ENCODE measurements at regions of chr17 and their contacts with region 1.

Region 1: DNA sequence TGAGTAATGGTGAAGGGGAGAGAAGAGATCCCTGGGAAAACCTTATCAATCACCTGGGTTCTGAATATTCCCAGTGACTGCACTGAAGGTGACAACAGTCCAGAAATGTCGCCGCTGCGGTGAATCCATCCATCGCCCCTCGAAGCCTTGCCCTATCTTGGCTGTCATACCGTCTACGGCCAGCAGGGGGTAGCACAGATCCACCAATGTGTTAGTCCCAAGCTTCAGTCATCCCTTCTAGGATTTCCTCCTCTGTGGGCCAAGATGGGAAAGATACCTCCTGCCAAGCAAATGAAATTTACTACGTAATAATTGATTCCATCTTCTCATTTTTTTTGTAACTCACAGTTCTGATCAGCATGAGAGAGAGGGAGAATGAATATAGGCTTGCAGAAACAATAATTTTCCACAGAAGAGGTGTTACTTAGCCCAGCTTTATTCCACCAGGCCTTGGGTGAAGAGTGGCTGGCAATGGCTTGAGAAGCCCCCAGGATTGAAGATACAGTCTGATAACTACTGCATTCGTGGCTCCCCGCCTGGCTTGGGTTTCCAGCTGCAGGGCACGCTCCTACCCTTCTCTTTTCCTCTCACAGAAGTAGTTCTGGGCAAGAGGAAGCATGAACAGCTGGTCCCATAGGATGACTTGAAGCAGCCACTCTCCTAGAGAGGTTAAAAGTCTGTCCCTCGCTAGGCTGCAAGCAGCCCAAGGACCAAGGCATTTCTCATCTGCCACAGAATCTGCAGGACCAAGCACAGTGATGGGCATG is 2.6 kb upstream of the FMNL1 start:
- DNase-seq: peak; percentile 61
- H3K4me3 ChIP-seq: peak overlapping the region; percentile 27; the same call in 1 of the 2 replicates
- H3K27ac ChIP-seq: no peak overlapping the region
- H3K27me3 ChIP-seq: peaks cover 24% of the 10 kb centered on the region
- CTCF ChIP-seq: peak; percentile 88

Region 2: GRCh38 chr17:45235416-45236281 is 16.6 kb after region 1 on chr17:
- CTCF ChIA-PET with region 1: interaction called, 48 read pairs
- POLR2A ChIA-PET with region 1: interaction called, 5 read pairs
- DNase-seq: peak; percentile 49
- H3K4me3 ChIP-seq: no peak overlapping the region
- H3K27ac ChIP-seq: no peak overlapping the region
- H3K27me3 ChIP-seq: peaks cover 10% of the 10 kb centered on the region
- CTCF ChIP-seq: peak; percentile 81

Region 3: DNA sequence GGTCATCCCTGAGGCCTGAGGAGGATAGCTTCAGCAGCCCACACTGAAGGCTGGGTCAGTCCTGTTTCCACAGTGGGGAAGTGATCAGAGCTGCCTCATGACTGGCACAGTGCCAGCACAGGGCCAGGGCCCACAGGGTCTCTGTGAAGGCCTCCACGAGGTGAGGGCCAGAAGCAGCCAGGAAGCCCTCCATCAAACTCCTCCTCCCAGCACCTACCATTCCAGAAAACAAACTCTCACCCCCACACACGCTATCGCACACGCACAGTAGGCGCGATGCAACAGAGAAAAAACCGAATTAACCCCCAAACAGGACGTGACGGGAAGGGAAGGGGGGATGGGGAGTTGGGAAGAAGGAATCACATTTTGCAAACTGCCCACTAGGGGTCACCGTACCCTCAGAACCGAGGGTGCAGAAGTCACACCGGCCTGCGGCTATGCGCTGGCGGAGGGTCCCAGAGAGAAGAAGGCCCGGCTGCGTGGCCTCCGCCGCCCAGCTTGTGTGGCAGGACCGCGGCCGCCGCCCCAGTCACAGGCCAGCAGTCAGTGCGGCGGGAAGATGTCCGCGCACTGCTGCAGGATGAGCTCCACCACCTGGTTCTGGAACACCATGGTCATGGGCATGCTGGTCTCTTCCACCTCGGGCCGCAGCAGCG is 176.0 kb after region 1 on chr17:
- CTCF ChIA-PET with region 1: interaction called, 10 read pairs
- POLR2A ChIA-PET with region 1: interaction called, 3 read pairs
- DNase-seq: peak; percentile 81
- H3K4me3 ChIP-seq: peak overlapping the region; percentile 50
- H3K27ac ChIP-seq: no peak overlapping the region
- H3K27me3 ChIP-seq: peaks cover 5% of the 10 kb centered on the region
- CTCF ChIP-seq: peak; percentile 79

Region 4: GRCh38 chr17:45428050-45428617 is 209.1 kb after region 1 on chr17:
- CTCF ChIA-PET with region 1: interaction called, 45 read pairs
- POLR2A ChIA-PET with region 1: interaction called, 5 read pairs
- DNase-seq: peak; percentile 8
- H3K4me3 ChIP-seq: no peak overlapping the region
- H3K27ac ChIP-seq: no peak overlapping the region
- H3K27me3 ChIP-seq: peaks cover 45% of the 10 kb centered on the region
- CTCF ChIP-seq: peak; percentile 92